H1 (cell line): ENCODE measurements at regions of chr1 and their contacts with region 1.

Region 1: DNA sequence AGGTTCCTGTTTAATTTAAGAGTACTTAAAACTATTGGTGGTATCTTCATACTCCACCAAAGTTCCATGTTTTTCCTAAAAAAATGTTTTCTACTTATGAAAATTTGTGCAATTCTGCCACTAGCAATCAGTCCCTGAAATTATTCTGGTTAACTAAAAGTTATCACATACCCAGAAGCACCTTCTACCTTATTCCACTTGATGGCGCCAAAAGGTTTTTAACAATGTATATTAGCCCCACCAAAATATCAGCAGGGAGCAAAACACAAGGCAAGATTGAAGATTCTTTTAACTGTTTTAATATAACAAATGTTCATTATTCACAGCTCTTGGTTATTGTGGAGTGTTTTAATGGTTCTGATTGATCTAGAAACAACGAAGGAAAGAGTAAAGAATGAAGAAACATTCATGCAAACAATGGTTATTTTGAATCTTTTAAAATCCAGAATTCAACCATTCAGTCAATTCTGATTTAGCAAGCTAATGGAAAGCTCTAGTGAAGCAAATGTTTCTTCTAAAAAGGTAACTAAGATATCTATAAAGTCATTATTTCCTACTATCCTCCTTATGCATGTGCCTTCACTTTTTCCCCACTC is 67.2 kb downstream of the TTLL7 start:
- DNase-seq: no peak
- H3K4me3 ChIP-seq: no peak overlapping the region
- H3K27ac ChIP-seq: no peak overlapping the region
- H3K4me1 ChIP-seq: no peaks in the 10 kb centered on the region
- H3K27me3 ChIP-seq: no peaks in the 10 kb centered on the region
- CTCF ChIP-seq: peak in 2 of 3 experiments; percentile 57 to 60; a peak in 2 of 4 replicates
- EP300 ChIP-seq: no peak
- POLR2A ChIP-seq: no peak
- RAD21 ChIP-seq: peak; percentile 82 to 86

Region 2: DNA sequence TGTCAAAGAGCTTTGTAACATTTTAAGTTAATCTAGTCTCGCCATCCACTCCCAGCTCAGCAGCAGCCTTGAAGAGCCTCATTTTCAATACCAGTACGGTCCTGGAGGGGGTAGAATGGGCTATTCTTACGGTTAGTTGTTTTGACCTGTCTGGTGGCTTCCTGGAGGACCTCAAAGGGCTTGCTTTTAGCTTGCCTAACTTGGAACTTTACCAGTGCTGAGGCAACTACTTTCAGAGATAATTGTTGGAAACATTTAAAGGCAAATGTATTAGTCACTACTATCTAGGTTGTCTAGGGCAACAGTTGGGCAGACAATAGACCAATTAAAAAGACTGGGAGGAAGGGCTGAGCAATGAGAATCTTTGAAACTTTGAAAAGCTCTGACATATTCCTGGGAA is 11.2 kb after region 1 on chr1:
- CTCF ChIA-PET with region 1: interaction called, 17 read pairs
- POLR2A ChIA-PET with region 1: no interaction called
- DNase-seq: no peak
- H3K4me3 ChIP-seq: no peak overlapping the region
- H3K27ac ChIP-seq: no peak overlapping the region
- H3K4me1 ChIP-seq: no peaks in the 10 kb centered on the region
- H3K27me3 ChIP-seq: peaks cover 0 to 1% (median 0%) of the 10 kb centered on the region in 4 experiments; a peak in 1 of 7 replicates
- CTCF ChIP-seq: peak in 2 of 3 experiments; percentile 28 to 34; a peak in 2 of 4 replicates
- EP300 ChIP-seq: no peak
- POLR2A ChIP-seq: no peak
- RAD21 ChIP-seq: peak; percentile 30 to 48; a peak in 3 of 4 replicates

Region 3: DNA sequence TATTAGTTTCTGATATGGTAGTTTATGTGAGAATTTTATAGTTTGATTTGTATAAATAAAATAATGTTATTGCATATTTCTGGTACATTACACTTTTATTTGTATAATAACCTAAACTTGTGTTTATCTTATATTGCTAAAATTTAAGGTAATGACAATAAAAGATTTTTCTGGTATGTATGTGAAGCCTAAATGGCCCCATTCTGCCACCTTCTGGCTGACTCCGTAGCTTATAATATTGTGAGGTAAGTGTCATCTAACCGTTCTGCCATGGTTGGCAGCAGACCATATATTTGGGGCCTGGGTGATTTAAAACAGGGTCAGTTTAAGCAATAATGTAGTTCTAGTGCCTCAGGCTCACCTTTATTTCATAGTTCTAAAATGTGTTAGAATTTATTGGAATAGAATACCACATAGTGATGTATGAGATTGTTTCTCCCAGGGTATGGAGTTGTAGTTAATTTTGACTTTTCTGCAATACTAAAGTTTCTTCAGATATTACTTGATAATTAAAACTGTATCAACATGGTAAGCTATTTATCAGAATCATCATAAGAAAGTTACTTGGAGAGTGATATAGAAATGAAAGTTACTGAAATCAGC is 191.1 kb after region 1 on chr1:
- CTCF ChIA-PET with region 1: interaction called, 20 read pairs
- POLR2A ChIA-PET with region 1: no interaction called
- DNase-seq: no peak
- H3K4me3 ChIP-seq: no peak overlapping the region
- H3K27ac ChIP-seq: no peak overlapping the region
- H3K4me1 ChIP-seq: no peaks in the 10 kb centered on the region
- H3K27me3 ChIP-seq: no peaks in the 10 kb centered on the region
- CTCF ChIP-seq: peak in 2 of 3 experiments; percentile 59 to 60; a peak in 3 of 4 replicates
- EP300 ChIP-seq: no peak
- POLR2A ChIP-seq: no peak
- RAD21 ChIP-seq: peak; percentile 76 to 79